ENCODE measurements at regions of chr3 and their contacts with region 1.

Region 1: DNA sequence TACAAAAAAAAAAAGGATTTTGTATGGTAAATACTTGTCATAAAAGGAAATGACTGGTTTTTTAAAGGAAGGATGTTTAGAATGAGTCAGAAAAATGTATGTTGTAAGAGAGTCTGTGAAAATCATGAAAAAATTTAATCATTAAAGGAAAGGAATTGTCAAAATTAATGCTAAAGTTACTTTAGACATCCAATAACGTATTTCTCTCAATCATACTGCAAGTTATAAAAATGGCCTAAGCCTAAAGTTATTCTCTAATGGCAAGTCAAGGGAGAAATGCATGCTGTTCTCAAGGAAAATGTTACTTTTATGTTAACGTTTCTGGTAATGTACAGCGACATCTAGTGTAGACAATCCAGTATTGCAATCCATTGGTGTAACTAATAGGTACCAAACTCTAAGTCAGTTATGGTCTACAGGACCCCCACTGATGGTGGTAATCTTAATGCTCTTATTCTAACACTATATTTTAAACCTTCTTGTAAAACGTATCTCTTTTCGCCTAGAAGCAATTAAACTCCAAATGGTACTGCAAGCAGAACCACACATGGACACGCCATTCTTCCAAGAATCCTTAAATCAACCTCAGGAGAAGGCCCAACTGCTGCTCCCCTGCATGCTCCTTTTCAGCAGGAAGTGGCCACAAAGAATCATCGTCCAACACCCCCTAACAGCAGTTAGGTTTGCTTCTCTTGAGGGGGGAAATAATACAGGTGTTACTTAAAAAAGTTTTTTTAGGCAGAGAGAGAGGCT is 35.2 kb downstream of the NCEH1 start:
- DNase-seq: no peak
- ATAC-seq: no peak

Region 2: GRCh38 chr3:174387736-174388135 is 1712.1 kb after region 1 on chr3:
- intact Hi-C with region 1: loop called (anchors 5 kb)
- DNase-seq: no peak
- ATAC-seq: no peak